ENCODE measurements at regions of chr2 and their contacts with region 1.

Region 1: GRCh38 chr2:9799665-9800632 is 43.3 kb upstream of the TAF1B start:
- DNase-seq: peak; percentile 87
- H3K4me3 Mint-ChIP-seq: peak overlapping the region; percentile 35
- H3K27ac Mint-ChIP-seq: peak overlapping the region; percentile 46
- H3K4me1 Mint-ChIP-seq: peaks cover 41% of the 10 kb centered on the region
- H3K27me3 Mint-ChIP-seq: no peaks in the 10 kb centered on the region
- CTCF ChIP-seq: peak; percentile 95

Region 2: GRCh38 chr2:9630749-9631483 is 169.0 kb before region 1 on chr2 and contains the start of gene YWHAQ:
- CTCF ChIA-PET with region 1: interaction called, 3 read pairs
- POLR2A ChIA-PET with region 1: interaction called, 16 read pairs
- intact Hi-C with region 1: no loop called
- DNase-seq: peak; percentile 97
- H3K4me3 Mint-ChIP-seq: peak within 1 kb of the TSS; percentile 97
- H3K27ac Mint-ChIP-seq: peak within 1 kb of the TSS; percentile 85
- H3K4me1 Mint-ChIP-seq: peaks cover 24% of the 10 kb centered on the region
- H3K27me3 Mint-ChIP-seq: no peaks in the 10 kb centered on the region
- CTCF ChIP-seq: no peak
- total RNA-seq, gene YWHAQ: 239 TPM in 2 replicates

Region 3: DNA sequence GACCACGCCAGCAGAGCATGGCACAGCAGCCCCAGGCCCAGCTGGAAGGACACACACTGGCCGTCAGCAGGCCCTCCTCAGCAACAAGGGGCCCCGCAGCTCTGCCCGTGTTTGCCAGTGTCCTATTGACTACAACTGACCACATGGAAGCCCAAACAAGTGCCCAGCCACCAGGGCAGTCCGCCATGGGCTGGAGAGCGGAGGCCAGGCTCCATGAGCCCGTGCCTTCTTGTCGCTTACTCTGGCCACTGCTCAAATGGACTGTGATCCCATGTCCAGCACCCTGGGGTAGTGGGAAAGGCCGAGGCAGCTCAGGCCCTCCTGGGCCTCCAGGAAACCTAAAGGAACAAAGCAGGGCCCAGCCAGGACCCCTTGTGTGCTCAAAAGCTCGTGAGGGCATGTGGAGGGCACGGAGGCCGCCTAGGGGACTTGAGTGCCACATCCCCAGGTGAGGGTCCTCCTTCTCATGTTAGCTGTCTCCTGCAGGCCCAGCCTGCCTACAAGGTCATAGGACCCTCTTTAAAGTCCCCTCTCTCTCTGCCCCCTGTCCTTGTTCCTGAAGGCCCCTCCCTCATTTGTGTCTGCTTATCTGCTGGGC is 10.5 kb before region 1 on chr2:
- CTCF ChIA-PET with region 1: interaction called, 25 read pairs
- POLR2A ChIA-PET with region 1: no interaction called
- intact Hi-C with region 1: no loop called
- DNase-seq: no peak
- H3K4me3 Mint-ChIP-seq: no peak overlapping the region
- H3K27ac Mint-ChIP-seq: no peak overlapping the region
- H3K4me1 Mint-ChIP-seq: no peaks in the 10 kb centered on the region
- H3K27me3 Mint-ChIP-seq: no peaks in the 10 kb centered on the region
- CTCF ChIP-seq: no peak

Region 4: DNA sequence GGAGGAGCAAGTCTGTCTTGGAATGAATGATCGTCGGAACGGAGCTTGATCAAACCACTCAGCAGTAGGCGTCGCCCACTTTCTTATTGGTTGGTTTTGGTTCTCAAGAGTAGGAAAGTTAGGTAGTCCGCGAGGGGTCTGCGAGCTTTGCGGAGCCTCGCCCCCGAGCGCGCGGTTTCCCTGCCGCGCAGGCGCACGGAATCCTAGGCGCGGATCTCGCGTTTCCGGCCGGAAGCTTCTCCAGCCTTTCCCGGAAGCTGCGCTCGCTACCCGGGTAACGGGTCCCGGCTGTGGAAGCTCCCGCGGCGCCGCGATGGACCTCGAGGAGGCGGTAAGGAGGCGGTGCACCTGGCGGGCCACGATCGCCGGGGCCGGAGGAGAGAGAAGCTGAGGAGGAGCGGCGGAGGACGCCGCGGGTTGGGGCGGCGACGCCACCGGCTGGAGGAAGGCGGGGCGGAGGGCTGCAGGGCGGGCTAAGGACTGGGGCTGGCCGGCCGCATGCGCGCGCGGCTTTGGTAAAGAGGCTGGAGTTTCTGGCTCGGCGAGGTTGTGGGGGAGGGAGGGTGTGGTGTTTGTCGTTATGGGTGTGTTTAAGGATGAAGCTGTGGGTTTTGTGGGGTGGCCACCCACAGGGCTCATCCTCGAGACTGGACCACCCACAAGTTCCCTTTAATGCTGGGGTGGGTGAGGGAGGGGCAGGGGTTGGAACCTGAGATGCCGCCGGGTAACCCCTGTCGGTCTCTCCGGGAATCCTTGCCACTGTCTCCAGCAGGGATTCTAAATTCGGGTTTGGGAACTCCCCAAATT is 43.5 kb after region 1 on chr2 and contains the start of gene TAF1B:
- CTCF ChIA-PET with region 1: interaction called, 42 read pairs
- POLR2A ChIA-PET with region 1: interaction called, 113 read pairs
- intact Hi-C with region 1: loop called (anchors 1 kb)
- DNase-seq: peak; percentile 94
- H3K4me3 Mint-ChIP-seq: peak within 1 kb of the TSS; percentile 82
- H3K27ac Mint-ChIP-seq: peak within 1 kb of the TSS; percentile 92
- H3K4me1 Mint-ChIP-seq: peaks cover 40% of the 10 kb centered on the region
- H3K27me3 Mint-ChIP-seq: no peaks in the 10 kb centered on the region
- CTCF ChIP-seq: no peak
- total RNA-seq, gene TAF1B: 19.7 and 25.5 TPM in 2 replicates

Region 5: GRCh38 chr2:9914384-9915065 is 114.6 kb after region 1 on chr2:
- CTCF ChIA-PET with region 1: interaction called, 54 read pairs
- POLR2A ChIA-PET with region 1: interaction called, 36 read pairs
- intact Hi-C with region 1: loop called (anchors 1 kb)
- DNase-seq: peak; percentile 92
- H3K4me3 Mint-ChIP-seq: no peak overlapping the region
- H3K27ac Mint-ChIP-seq: peak overlapping the region; percentile 64
- H3K4me1 Mint-ChIP-seq: peaks cover 10% of the 10 kb centered on the region
- H3K27me3 Mint-ChIP-seq: no peaks in the 10 kb centered on the region
- CTCF ChIP-seq: peak; percentile 65

Region 6: DNA sequence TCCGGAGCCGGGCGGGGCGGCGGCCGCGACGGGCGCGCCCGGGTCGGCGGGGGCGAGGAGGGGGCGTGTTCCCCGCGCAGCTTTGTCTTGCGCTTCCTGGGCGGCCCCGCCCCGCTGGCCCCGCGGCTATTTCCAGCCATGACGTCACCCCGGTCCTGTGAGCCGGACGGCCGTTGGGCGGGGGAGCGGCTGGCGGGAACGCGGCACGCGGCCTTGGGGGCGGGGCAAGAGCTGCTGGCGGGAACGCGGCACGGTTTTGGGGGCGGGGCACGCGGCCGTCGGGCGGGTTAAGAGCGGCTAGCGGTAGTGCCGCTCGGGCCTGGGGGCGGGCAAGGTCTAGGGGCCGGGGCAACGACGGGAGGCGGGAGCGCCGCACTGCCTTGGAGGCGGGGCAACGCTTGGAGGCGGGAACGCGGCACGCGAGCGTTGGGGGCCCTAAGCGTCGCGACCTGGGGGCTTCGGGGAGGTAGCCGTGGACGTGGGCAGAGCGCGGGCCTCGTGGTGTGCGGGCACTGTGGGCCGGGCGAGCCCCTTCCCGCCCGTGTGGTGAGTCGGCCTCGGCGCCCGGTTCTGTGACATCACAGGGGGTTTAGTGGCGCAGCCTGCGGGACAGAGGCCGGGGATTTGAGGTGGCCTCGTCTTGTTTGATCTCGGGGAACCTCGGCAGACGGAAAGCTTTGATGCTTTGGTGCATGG is 244.1 kb after region 1 on chr2:
- CTCF ChIA-PET with region 1: interaction called, 60 read pairs
- POLR2A ChIA-PET with region 1: interaction called, 9 read pairs
- intact Hi-C with region 1: loop called (anchors 1 kb)
- DNase-seq: peak; percentile 92
- H3K4me3 Mint-ChIP-seq: peak overlapping the region; percentile 73
- H3K27ac Mint-ChIP-seq: peak overlapping the region; percentile 75
- H3K4me1 Mint-ChIP-seq: peaks cover 4% of the 10 kb centered on the region
- H3K27me3 Mint-ChIP-seq: no peaks in the 10 kb centered on the region
- CTCF ChIP-seq: no peak